OCI-LY7 (cell line): ENCODE measurements at regions of chr11 and their contacts with region 1.

Region 1: DNA sequence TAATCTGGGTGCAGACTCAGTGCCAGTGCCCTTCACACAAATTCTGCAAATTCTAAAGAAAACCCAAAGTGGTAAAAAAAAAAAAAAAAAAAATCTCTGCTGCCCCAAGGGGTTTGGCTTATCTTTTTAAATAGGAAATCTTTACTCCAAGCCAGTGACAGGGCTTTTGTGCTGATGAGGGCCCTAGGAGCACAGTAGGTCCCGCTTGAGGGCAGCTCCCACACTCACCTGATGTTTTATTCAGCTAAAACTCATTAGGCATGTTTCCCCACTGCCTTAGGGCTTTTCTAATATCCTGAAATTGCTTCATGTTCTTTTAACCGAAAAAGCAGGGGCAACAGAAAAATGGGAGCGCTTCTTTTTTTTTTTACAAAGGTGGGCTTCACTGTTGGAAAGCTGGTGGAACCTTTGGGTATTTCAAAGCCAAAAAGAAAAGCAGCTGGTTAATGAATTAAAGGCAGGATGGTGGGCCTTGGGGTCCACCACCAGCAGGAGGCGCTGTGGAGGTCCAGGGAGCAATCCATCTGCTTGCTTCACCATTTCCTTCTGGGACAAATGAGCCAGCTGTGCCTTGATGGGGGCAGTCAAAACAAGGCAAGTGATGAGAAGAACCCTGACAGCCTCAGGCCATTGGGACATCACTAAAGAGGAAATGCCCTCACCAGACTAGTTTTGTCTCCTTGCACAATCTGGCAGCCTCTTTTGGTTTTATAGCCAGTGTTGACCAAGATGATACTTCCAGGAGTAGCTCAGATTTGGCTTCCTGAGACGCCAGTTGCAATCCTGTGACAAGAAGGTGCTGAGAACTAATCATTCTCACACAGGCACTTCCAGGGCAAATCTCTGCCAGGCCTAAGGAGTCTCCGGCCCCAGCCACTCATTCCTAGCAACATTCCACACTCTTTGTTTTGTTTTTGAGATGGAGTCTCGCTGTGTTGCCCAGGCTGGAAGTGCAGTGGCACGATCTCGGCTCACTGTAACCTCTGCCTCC is 38.4 kb upstream of the WEE1 start:
- DNase-seq: peak; percentile 81
- H3K4me3 ChIP-seq: no peak overlapping the region
- H3K27ac ChIP-seq: no peak overlapping the region
- H3K4me1 ChIP-seq: peaks cover 12% of the 10 kb centered on the region
- CTCF ChIP-seq: peak; percentile 100

Region 2: DNA sequence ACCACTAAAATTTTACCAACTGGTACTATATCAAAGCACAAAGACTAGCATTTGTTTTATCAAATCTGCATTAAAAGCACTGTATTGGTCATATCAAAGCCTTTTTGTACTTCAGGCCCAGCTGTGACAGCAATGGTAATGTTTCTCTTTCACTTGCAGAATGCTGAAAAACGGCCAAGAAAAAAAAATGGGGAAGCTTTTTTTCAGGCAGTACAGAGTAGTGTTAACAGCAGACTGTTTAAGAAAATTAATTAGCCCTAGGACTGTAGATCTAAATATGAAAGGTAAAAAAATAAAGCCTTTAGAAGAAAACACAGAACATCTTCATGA is 303.3 kb before region 1 on chr11:
- CTCF ChIA-PET with region 1: no interaction called
- POLR2A ChIA-PET with region 1: no interaction called
- intact Hi-C with region 1: no loop called
- DNase-seq: no peak
- H3K4me3 ChIP-seq: no peak overlapping the region
- H3K27ac ChIP-seq: no peak overlapping the region
- H3K4me1 ChIP-seq: no peaks in the 10 kb centered on the region
- CTCF ChIP-seq: no peak

Region 3: GRCh38 chr11:9460322-9461067 is 74.6 kb before region 1 on chr11 and contains the start of gene ZNF143:
- CTCF ChIA-PET with region 1: no interaction called
- POLR2A ChIA-PET with region 1: no interaction called
- intact Hi-C with region 1: no loop called
- DNase-seq: peak; percentile 100
- H3K4me3 ChIP-seq: peak within 1 kb of the TSS; percentile 97
- H3K27ac ChIP-seq: peak within 1 kb of the TSS; percentile 97
- H3K4me1 ChIP-seq: peaks cover 28% of the 10 kb centered on the region
- CTCF ChIP-seq: no peak
- total RNA-seq, gene ZNF143: 25.0 and 36.2 TPM in 2 replicates

Region 4: DNA sequence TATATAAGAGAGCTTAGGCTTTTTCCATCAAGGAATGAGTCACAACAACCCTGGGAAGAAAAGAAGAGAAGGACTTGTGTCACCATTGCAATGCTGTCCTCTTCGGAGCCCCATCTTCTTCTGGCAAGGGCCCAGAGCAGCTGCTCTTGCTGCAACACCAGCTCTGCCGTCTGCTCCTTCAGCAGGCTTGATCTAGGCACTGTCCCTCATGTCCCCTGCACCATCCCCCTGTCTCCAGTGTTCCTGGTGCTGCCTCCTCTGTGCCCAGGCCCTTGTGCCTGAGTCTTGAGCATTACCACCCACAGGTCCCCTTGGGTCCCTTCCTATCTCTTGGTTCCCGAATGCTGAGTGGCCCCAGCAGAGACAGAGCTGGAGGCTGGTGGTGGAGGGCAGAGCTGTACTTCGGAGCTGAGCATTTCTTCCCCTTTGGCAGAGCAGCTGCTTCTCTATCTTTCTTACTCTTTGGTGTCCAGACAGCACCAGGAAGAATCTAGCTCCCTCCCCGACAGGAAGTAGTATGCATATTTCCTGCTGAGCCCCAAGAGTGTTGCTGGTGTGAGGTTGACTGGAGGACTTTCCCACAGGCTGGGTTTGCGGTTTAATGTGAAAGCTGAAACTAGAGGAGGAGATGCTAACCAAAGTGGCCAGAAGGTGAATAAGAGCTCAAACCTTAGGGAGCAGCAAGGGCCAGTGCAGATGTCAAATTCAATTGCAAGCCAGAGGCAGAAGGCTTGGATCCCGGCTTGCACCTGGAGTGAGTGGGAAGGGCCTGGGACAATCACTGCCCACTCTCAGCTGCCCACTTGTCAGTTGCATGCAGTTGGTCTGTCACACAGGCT is 66.2 kb after region 1 on chr11:
- CTCF ChIA-PET with region 1: interaction called, 3 read pairs
- POLR2A ChIA-PET with region 1: interaction called, 10 read pairs
- intact Hi-C with region 1: no loop called
- DNase-seq: peak; percentile 95
- H3K4me3 ChIP-seq: peak overlapping the region; percentile 74
- H3K27ac ChIP-seq: peak overlapping the region; percentile 99
- H3K4me1 ChIP-seq: peaks cover 96% of the 10 kb centered on the region
- CTCF ChIP-seq: no peak